GM12878 (cell line): ENCODE measurements at regions of chr11 and their contacts with region 1.

Region 1: GRCh38 chr11:108586600-108586999 is 7.0 kb downstream of the EXPH5 start:
- DNase-seq: no peak
- ATAC-seq: no peak
- H3K4me3 ChIP-seq: no peak overlapping the region
- H3K27ac ChIP-seq: no peak overlapping the region
- H3K4me1 ChIP-seq: peaks cover 11% of the 10 kb centered on the region
- H3K27me3 ChIP-seq: no peaks in the 10 kb centered on the region
- CTCF ChIP-seq: no peak
- EP300 ChIP-seq: no peak
- POLR2A ChIP-seq: no peak
- RAD21 ChIP-seq: no peak

Region 2: DNA sequence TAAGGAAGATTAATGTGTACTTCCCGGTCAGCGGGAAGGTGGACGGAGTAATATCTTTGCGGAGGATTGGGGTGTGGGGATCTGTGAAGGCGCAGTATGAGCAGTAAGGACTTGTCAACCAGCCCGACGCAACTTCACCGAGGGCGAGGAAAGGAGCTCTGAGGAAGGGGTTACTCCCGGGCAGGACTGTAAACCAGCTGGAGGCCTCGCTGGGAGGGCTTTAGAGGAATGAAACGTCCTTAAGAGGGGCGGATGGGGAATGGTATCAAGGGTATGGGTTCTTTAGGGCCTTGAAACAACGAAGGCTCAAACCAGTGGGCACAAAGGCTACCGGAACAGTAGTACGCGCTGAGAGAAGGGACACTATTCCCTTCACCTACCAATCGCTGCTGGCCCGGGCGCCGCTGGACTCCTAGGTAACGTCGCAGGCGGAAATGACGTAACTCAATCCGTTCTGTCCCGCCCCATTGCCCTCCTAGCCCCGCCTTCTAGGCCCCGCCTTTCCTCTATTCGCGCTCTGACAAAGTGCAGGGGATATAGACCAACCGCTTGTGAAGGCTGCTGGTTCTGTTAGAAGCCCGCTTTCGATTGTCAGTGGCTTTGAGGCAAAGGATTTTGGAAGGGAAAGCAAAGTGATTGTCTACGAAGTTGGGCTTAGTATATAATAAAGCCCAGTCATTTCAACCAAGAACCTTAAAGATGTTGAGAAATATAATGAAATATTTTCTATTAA is 119.3 kb before region 1 on chr11 and contains the start of gene C11orf65:
- CTCF ChIA-PET with region 1: interaction called, 4 read pairs
- POLR2A ChIA-PET with region 1: no interaction called
- RAD21 ChIA-PET with region 1: no interaction called
- SMC1A ChIA-PET with region 1: interaction called, 5 read pairs
- in situ Hi-C with region 1: no loop called
- intact Hi-C with region 1: loop called (anchors 1 kb)
- DNase-seq: peak; percentile 96
- ATAC-seq: peak; percentile 99
- H3K4me3 ChIP-seq: peak within 1 kb of the TSS; percentile 74
- H3K27ac ChIP-seq: peak within 1 kb of the TSS; percentile 93
- H3K4me1 ChIP-seq: no peaks in the 10 kb centered on the region
- H3K27me3 ChIP-seq: no peaks in the 10 kb centered on the region
- CTCF ChIP-seq: no peak
- EP300 ChIP-seq: 0 out of 4 replicates have a peak, but pooled peaks of 1 of the 2 experiments have one; percentile 4
- POLR2A ChIP-seq: peak; percentile 95
- RAD21 ChIP-seq: no peak
- polyA plus RNA-seq, gene C11orf65: 1.4 to 1.5 TPM

Region 3: DNA sequence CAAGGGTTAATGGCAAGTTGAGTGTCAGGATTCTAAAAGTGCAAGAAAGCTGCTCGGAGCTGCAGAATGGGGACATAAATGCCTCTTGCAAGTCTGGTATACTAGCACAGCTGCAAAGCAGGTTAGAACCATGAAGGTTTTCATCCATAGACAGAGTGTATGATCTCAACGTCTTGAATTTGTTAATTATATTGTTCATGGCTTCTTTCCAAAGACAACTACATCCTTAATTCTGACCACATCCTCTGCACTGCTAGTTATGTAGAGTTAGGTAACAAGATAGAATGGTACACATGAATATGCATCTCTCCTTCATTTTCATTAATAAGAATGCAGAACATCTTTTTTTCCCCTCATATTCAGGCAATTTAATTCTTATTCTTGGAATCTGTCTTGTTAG is 27.3 kb before region 1 on chr11:
- CTCF ChIA-PET with region 1: interaction called, 15 read pairs
- POLR2A ChIA-PET with region 1: interaction called, 23 read pairs
- RAD21 ChIA-PET with region 1: interaction called, 38 read pairs
- SMC1A ChIA-PET with region 1: interaction called, 26 read pairs
- in situ Hi-C with region 1: no loop called
- intact Hi-C with region 1: no loop called
- DNase-seq: no peak
- ATAC-seq: peak; percentile 45
- H3K4me3 ChIP-seq: no peak overlapping the region
- H3K27ac ChIP-seq: no peak overlapping the region
- H3K4me1 ChIP-seq: peaks cover 11% of the 10 kb centered on the region
- H3K27me3 ChIP-seq: no peaks in the 10 kb centered on the region
- CTCF ChIP-seq: no peak
- EP300 ChIP-seq: no peak
- POLR2A ChIP-seq: no peak
- RAD21 ChIP-seq: no peak

Region 4: GRCh38 chr11:108609681-108610080 is 23.1 kb after region 1 on chr11:
- CTCF ChIA-PET with region 1: interaction called, 7 read pairs
- POLR2A ChIA-PET with region 1: interaction called, 5 read pairs
- RAD21 ChIA-PET with region 1: interaction called, 3 read pairs
- SMC1A ChIA-PET with region 1: interaction called, 11 read pairs
- in situ Hi-C with region 1: no loop called
- intact Hi-C with region 1: no loop called
- DNase-seq: no peak
- ATAC-seq: no peak
- H3K4me3 ChIP-seq: no peak overlapping the region
- H3K27ac ChIP-seq: no peak overlapping the region
- H3K4me1 ChIP-seq: no peaks in the 10 kb centered on the region
- H3K27me3 ChIP-seq: no peaks in the 10 kb centered on the region
- CTCF ChIP-seq: no peak
- EP300 ChIP-seq: no peak
- POLR2A ChIP-seq: no peak
- RAD21 ChIP-seq: no peak

Region 5: DNA sequence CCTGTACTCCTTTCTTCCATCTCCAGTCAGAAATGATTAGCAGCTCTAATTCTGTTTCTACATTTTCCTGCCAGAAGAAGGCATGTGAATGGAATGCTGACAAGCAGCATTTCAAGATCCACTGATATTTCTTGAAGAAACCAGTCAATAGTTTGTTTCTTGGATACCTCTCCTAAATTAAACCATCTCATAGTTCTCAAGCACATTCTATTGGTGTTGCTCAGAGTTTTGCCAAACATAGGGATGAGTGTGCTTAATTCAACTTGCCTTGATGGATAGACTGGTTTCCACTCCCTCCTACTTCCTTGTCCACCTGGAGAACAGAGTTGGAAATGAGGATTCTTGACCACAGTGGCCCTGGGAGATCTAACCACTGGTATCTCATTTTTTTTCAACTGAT is 48.5 kb after region 1 on chr11:
- CTCF ChIA-PET with region 1: interaction called, 14 read pairs
- POLR2A ChIA-PET with region 1: interaction called, 4 read pairs
- RAD21 ChIA-PET with region 1: interaction called, 102 read pairs
- SMC1A ChIA-PET with region 1: interaction called, 9 read pairs
- in situ Hi-C with region 1: no loop called
- intact Hi-C with region 1: no loop called
- DNase-seq: no peak
- ATAC-seq: no peak
- H3K4me3 ChIP-seq: no peak overlapping the region
- H3K27ac ChIP-seq: no peak overlapping the region
- H3K4me1 ChIP-seq: no peaks in the 10 kb centered on the region
- H3K27me3 ChIP-seq: no peaks in the 10 kb centered on the region
- CTCF ChIP-seq: no peak
- EP300 ChIP-seq: no peak
- POLR2A ChIP-seq: no peak
- RAD21 ChIP-seq: no peak

Region 6: DNA sequence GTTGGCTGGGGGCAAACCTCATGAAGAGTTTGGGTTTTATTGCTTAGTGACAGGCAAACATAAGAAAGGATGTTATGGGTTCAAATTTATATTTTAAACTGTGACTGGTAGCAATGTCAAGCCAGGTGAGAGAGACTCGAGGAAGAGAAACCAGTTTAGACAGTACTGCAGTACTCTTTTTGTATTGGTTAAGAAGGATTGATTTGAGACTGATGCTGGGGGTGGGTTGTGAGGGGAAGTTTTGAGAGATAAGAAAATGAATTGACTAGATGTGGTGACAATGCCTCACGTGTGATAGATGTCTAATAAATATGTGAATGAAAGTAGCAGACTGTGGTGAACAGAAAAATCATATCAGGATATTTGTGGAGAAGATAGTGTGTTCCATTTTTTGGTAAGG is 220.7 kb after region 1 on chr11:
- CTCF ChIA-PET with region 1: no interaction called
- POLR2A ChIA-PET with region 1: no interaction called
- RAD21 ChIA-PET with region 1: no interaction called
- SMC1A ChIA-PET with region 1: no interaction called
- in situ Hi-C with region 1: no loop called
- intact Hi-C with region 1: no loop called
- DNase-seq: no peak
- ATAC-seq: peak; percentile 51; the same call in 2 of the 3 replicates
- H3K4me3 ChIP-seq: no peak overlapping the region
- H3K27ac ChIP-seq: no peak overlapping the region
- H3K4me1 ChIP-seq: no peaks in the 10 kb centered on the region
- H3K27me3 ChIP-seq: no peaks in the 10 kb centered on the region
- CTCF ChIP-seq: no peak
- EP300 ChIP-seq: no peak
- POLR2A ChIP-seq: no peak
- RAD21 ChIP-seq: no peak